ENCODE measurements at regions of chr7 and their contacts with region 1.

Region 1: DNA sequence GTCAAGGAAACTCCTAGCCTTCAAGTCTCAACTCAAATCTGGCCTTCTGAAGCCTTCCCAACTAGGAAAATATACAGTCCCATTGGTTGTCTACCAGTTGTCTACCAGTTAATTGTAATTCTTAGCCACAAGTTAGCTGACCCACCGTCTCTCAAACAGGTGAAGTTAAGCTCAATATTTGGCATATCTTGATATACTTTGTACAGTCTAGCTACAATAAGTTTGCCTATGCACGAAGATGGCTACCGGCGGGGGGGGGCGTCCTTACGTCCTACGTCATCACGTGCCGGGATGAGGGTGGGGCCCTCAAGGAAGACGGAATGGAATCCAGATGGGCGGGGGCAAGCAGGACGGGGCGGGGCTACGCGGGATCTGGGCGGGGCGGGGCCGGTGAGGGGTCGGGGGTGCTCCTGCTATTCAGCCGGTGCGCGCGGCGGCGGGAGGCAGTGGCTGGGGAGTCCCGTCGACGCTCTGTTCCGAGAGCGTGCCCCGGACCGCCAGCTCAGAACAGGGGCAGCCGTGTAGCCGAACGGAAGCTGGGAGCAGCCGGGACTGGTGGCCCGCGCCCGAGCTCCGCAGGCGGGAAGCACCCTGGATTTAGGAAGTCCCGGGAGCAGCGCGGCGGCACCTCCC is at the start of gene AHR:
- DNase-seq: peak; percentile 87
- H3K4me3 ChIP-seq: peak within 1 kb of the TSS; percentile 71 to 94 (median 93)
- H3K27ac ChIP-seq: peak within 1 kb of the TSS; percentile 90
- H3K4me1 ChIP-seq: peaks cover 12% of the 10 kb centered on the region
- H3K27me3 ChIP-seq: no peaks in the 10 kb centered on the region
- CTCF ChIP-seq: no peak
- total RNA-seq, gene AHR: 101 to 478 TPM

Region 2: DNA sequence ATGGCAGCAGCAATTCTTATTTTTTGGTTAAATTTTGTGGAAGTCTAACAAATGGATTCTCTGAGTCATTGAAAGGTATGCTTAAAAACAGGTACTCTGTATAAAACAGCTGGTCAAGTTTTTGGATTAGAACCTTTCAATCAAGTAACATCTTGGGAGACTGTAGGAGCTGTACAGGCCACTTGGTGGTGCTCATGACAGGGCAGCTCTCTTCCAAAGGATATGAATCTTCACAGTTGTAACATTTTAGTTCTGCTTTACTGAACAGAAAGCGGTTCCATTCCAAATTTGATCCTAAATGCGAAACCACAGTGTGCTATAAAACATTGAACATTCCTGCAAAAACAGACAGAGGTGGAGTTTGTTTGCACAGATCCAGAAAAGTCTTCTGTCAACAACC is 372.0 kb before region 1 on chr7:
- CTCF ChIA-PET with region 1: no interaction called
- dilution Hi-C with region 1: no loop called
- in situ Hi-C with region 1: no loop called
- intact Hi-C with region 1: loop called (anchors 1 kb)
- DNase-seq: peak; percentile 23
- H3K4me3 ChIP-seq: no peak overlapping the region
- H3K27ac ChIP-seq: no peak overlapping the region
- H3K4me1 ChIP-seq: peaks cover 10% of the 10 kb centered on the region
- H3K27me3 ChIP-seq: no peaks in the 10 kb centered on the region
- CTCF ChIP-seq: peak; percentile 86 to 90

Region 3: GRCh38 chr7:17009007-17009719 is 289.2 kb before region 1 on chr7:
- CTCF ChIA-PET with region 1: interaction called, 4 read pairs
- dilution Hi-C with region 1: no loop called
- in situ Hi-C with region 1: no loop called
- intact Hi-C with region 1: loop called (anchors 1 kb)
- DNase-seq: no peak
- H3K4me3 ChIP-seq: no peak overlapping the region
- H3K27ac ChIP-seq: no peak overlapping the region
- H3K4me1 ChIP-seq: peaks cover 17% of the 10 kb centered on the region
- H3K27me3 ChIP-seq: no peaks in the 10 kb centered on the region
- CTCF ChIP-seq: peak; percentile 44 to 60

Region 4: DNA sequence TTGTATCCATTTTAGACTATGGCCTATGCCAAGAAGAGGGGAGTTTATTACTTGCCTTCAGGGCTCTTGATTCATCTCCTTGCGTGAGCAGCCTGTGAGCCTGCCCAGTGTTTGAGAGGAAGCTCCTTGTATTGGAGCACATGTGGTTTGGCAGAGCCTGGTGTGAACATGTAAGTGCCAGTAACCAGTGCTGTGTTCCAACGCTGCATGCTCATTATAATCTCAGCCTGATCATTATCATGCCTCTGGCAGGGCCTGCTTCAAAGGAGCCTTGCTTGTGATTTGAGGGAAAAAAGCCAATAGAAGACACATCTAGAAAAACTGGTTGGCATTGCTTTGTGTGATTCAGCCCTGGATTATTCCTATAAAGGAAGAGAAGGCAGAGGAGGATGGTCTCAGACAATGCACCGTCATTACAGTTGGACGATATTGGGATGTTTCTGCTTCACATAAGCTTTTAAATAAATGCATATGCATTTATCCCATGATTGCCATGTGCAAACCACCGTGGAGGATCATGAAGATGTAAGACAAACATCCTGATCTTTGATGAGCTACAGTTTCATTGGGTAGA is 203.2 kb before region 1 on chr7:
- CTCF ChIA-PET with region 1: no interaction called
- dilution Hi-C with region 1: no loop called
- in situ Hi-C with region 1: no loop called
- intact Hi-C with region 1: loop called (anchors 2 kb)
- DNase-seq: peak; percentile 99
- H3K4me3 ChIP-seq: no peak overlapping the region
- H3K27ac ChIP-seq: peak overlapping the region; percentile 87
- H3K4me1 ChIP-seq: peaks cover 57% of the 10 kb centered on the region
- H3K27me3 ChIP-seq: no peaks in the 10 kb centered on the region
- CTCF ChIP-seq: no peak

Region 5: DNA sequence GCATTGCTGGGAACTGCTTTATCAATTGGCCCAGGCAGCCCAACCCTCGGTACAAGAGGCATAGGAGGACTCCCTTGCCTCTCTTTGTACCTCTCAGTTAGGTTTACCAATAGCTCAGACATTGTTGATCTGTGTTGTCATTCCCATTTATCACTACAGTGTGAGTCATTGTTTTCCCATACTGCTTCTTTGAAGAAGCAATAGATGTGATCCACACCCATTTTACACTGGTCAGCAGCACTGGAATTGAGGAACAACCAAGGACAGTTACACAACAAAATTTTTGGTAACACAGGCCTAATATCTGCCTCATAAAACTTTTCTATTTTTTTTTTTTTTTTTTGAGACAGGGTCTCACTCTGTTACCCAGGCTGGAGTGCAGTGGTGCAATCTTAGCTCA is 334.8 kb after region 1 on chr7:
- CTCF ChIA-PET with region 1: no interaction called
- dilution Hi-C with region 1: no loop called
- in situ Hi-C with region 1: loop called in 1 of 2 experiments (anchors 10 kb)
- intact Hi-C with region 1: no loop called
- DNase-seq: peak; percentile 78
- H3K4me3 ChIP-seq: no peak overlapping the region
- H3K27ac ChIP-seq: no peak overlapping the region
- H3K4me1 ChIP-seq: peaks cover 6% of the 10 kb centered on the region
- H3K27me3 ChIP-seq: no peaks in the 10 kb centered on the region
- CTCF ChIP-seq: no peak